Prostate gland (tissue), 2 donors: ENCODE measurements at regions of chr14 and their contacts with region 1.

Region 1: DNA sequence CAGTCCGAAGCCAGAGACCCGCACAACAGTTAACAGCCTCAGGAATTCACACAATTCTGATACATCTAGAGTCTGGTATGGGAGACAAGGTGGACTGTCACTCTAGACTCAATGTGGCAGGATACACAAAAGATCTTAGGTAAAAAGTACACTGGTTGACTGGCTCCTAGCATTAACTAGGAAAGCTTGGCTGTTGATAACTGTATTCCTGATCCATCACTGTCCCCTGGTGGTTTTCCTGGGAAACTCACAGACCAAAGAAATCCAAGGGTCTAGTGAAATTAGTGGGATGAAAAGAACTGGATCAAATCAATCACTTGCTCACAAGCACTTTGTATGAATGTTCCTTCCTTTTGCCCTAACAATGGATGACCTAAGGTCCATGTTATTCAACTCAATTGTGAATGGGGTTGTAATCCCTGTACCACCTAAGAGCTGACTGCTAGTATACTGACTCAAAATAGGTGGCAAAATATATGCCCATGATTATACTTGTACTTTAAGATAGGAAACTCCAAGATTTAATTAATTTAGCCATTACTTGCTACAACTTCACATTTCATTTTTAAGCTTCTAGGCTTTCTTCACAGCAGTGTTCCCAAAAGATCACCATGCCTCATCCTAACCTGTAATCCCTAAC is 14.0 kb downstream of the NPC2 start:
- DNase-seq: no peak
- H3K4me3 ChIP-seq: no peak overlapping the region
- H3K27ac ChIP-seq: no peak overlapping the region
- H3K4me1 ChIP-seq: no peaks in the 10 kb centered on the region
- H3K27me3 ChIP-seq: no peaks in the 10 kb centered on the region
- CTCF ChIP-seq: peak; percentile 28 to 83 (median 66)
- POLR2A ChIP-seq: no peak

Region 2: GRCh38 chr14:74362361-74362915 is 116.7 kb before region 1 on chr14:
- intact Hi-C with region 1: loop called (anchors 5 kb)
- DNase-seq: peak; percentile 71
- H3K4me3 ChIP-seq: no peak overlapping the region
- H3K27ac ChIP-seq: no peak overlapping the region
- H3K4me1 ChIP-seq: no peaks in the 10 kb centered on the region
- H3K27me3 ChIP-seq: no peaks in the 10 kb centered on the region
- CTCF ChIP-seq: peak; percentile 76 to 94 (median 93)
- POLR2A ChIP-seq: no peak